ENCODE measurements at regions of chr22 and their contacts with region 1.

Region 1: DNA sequence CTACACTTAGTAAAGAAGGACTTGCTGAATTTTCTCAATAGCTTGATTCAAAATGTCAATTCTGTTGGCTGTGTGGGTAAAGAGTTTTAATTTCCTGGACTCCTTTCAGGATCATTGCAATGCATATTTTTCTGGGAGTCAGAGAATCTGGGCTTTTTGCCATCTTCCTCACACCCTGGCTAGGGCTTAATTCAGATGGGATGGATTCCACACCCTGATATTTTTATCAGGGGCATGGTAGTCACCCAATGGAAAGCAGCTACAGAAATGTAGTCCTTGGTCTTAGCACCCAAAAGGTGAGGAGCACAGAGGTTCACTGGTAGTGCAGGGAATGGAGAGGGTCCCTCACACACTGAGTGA is 79.3 kb downstream of the SGSM3 start:
- DNase-seq: no peak
- H3K4me3 ChIP-seq: no peak overlapping the region
- H3K27ac ChIP-seq: peak overlapping the region; percentile 43 to 81
- H3K4me1 ChIP-seq: peaks cover 6 to 35% of the 10 kb centered on the region in 2 donors
- H3K27me3 ChIP-seq: no peaks in the 10 kb centered on the region
- CTCF ChIP-seq: no peak

Region 2: DNA sequence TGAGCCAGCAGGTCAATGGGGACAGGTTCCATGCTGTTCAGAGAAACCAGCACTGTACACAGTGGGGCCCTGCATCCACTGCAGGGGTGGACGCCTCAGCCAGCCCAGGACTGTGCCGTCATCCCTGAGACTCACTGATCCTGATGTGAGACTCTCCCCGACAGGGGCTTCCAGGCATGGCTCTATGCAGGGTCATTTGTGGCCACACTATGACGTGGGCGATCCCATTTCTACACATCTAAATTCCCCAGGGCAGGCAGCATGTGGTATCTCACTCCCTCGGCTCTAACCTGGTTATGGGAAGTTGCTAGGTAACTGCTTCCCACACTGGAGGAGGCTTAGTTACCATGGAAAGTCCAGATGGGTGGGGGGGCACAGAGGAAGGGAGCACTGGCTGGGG is 469.1 kb before region 1 on chr22:
- intact Hi-C with region 1: no loop called
- DNase-seq: no peak
- H3K4me3 ChIP-seq: no peak overlapping the region
- H3K27ac ChIP-seq: no peak overlapping the region
- H3K4me1 ChIP-seq: no peaks in the 10 kb centered on the region
- H3K27me3 ChIP-seq: no peaks in the 10 kb centered on the region
- CTCF ChIP-seq: no peak

Region 3: GRCh38 chr22:40310081-40310767 is 139.4 kb before region 1 on chr22:
- intact Hi-C with region 1: no loop called
- DNase-seq: no peak
- H3K4me3 ChIP-seq: no peak overlapping the region
- H3K27ac ChIP-seq: peak overlapping the region; percentile 59 to 60
- H3K4me1 ChIP-seq: peaks cover 0 to 10% of the 10 kb centered on the region in 2 donors
- H3K27me3 ChIP-seq: no peaks in the 10 kb centered on the region
- CTCF ChIP-seq: no peak

Region 4: DNA sequence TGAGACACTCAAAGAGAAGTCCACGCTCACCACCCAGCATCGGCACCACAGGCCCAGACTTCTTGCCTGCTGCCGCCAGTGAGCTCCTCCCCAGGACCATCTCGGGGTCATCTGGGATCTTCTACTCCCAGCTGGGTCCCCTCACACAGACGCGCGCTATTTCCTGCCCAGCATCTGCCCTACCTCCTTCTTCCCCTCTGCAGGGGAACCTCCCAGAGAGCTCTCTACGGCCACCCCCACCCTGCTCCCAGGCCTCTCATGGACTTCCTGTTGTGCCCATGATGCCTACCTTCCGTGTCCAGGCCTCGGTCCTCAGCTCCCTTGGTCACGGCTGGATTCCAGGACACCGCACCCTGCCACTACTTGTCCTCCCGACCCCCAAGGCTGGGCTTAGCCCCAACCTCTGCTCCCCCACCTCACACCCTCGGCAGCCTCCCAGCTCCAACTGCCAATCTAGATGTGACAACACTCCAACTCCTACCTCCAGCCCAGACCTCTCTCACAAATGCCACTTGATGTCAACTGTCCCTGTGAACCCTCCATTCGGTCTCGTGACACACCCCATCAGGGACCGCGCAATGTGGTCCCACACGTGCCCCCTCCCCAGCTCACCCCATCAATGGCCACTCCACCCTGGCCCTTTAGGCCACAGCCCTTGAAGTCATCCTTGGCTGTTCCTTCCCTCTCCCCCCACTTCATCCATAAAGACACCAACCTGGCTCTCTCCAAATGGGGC is 34.0 kb before region 1 on chr22:
- intact Hi-C with region 1: no loop called
- DNase-seq: no peak
- H3K4me3 ChIP-seq: no peak overlapping the region
- H3K27ac ChIP-seq: no peak overlapping the region
- H3K4me1 ChIP-seq: no peaks in the 10 kb centered on the region
- H3K27me3 ChIP-seq: no peaks in the 10 kb centered on the region
- CTCF ChIP-seq: no peak

Region 5: DNA sequence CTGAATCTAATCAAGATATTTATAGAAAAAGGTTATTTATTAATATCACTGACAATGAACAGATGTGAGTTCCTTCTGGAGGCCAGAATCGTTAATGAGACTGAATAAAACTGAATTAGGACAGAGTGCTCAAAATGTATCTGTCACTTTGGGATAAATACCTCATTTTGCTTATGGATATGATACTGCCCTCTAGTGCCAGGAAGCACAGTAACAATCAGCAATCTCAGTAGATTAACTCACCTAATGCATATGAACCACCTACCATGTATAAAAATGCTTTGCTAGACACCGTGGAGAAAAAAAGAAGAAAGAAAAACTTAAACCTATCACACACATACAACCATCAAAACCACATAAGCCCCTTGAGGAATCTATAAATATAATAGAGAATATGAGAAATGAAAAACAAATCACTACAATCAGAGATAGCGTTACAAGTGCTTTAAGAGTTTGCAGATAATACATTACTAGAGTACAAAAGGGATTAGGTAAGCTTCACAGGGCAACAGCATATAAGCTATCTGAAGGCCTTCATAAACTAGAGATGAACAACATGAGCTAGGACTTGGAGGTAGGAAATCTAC is 38.1 kb after region 1 on chr22:
- intact Hi-C with region 1: loop called (anchors 5 kb)
- DNase-seq: no peak
- H3K4me3 ChIP-seq: no peak overlapping the region
- H3K27ac ChIP-seq: peak overlapping the region in 1 of 2 donors; percentile 10
- H3K4me1 ChIP-seq: peaks cover 18 to 35% of the 10 kb centered on the region in 2 donors
- H3K27me3 ChIP-seq: no peaks in the 10 kb centered on the region
- CTCF ChIP-seq: peak; percentile 39 to 54 (median 54)

Region 6: DNA sequence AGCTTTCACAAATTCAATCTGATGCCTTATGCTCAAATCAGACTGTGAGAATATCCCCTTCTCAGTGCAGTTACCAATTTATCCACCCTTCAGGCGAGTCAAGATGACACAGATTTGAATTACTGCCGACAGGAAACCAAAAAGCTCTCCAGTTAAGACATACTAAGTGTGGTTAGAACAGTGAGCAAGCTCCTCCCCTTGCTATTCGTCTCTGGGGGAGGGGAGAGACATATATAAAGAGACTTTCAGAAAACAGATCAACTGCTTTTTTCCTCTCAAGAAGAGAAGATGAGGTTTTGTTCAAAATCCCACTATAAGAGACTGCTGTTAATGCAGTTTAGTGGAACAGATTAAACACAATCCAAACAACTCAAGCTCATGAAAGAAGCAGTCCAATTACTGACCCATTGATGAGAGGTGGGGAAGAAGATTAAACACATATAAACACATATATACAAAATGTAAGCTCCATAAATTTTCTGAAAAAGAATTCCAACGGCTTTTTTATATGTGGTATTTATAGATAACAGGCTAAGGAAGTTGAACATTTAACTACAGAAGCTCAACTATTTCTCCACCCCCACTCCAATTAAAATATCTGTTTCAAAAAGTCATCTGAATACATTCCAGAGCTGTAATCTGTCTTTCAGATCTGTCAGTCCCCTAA is 84.2 kb after region 1 on chr22:
- intact Hi-C with region 1: loop called (anchors 5 kb)
- DNase-seq: no peak
- H3K4me3 ChIP-seq: peak overlapping the region; percentile 37 to 50
- H3K27ac ChIP-seq: peak overlapping the region; percentile 79 to 92
- H3K4me1 ChIP-seq: peaks cover 5 to 41% of the 10 kb centered on the region in 2 donors
- H3K27me3 ChIP-seq: no peaks in the 10 kb centered on the region
- CTCF ChIP-seq: no peak

Measured in ascending aorta (tissue), 2 donors.